Caco-2 (cell line): ENCODE measurements at regions of chr6 and their contacts with region 1.

Region 1: GRCh38 chr6:130293800-130294199 is 71.0 kb upstream of the SAMD3 start:
- DNase-seq: peak; percentile 73 to 74
- H3K4me3 ChIP-seq: no peak overlapping the region
- H3K4me3 Mint-ChIP-seq: no peak overlapping the region
- H3K27ac Mint-ChIP-seq: peak overlapping the region; percentile 49
- H3K4me1 ChIP-seq: peaks cover 4% of the 10 kb centered on the region; the same call in 1 of the 2 replicates
- H3K4me1 Mint-ChIP-seq: peaks cover 6% of the 10 kb centered on the region
- H3K27me3 ChIP-seq: no peaks in the 10 kb centered on the region
- H3K27me3 Mint-ChIP-seq: no peaks in the 10 kb centered on the region
- CTCF ChIP-seq: peak; percentile 60 to 75

Region 2: DNA sequence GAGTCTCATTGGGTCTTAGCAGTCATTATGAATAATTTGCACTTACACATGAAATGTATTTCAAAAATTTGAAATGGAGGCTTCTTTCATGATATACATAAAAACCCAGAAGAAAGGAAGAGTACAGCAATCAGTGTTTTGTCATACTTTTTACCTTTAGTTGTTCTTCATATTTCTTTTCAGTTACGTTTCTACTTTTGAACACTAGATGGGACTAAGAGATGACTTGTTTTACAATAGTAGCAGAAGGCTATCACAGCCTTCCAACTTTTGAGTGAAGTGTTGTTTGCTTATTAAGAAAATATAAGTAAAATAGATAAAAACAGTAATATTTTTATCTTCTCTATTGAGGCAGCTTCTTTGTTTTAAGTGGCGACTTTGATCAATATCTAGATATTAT is 217.3 kb before region 1 on chr6:
- CTCF ChIA-PET with region 1: no interaction called
- POLR2A ChIA-PET with region 1: no interaction called
- intact Hi-C with region 1: loop called (anchors 5 kb)
- DNase-seq: no peak
- H3K4me3 ChIP-seq: no peak overlapping the region
- H3K4me3 Mint-ChIP-seq: no peak overlapping the region
- H3K27ac Mint-ChIP-seq: no peak overlapping the region
- H3K4me1 ChIP-seq: no peaks in the 10 kb centered on the region
- H3K4me1 Mint-ChIP-seq: no peaks in the 10 kb centered on the region
- H3K27me3 ChIP-seq: no peaks in the 10 kb centered on the region
- H3K27me3 Mint-ChIP-seq: no peaks in the 10 kb centered on the region
- CTCF ChIP-seq: peak in 1 of 2 experiments; percentile 26

Region 3: DNA sequence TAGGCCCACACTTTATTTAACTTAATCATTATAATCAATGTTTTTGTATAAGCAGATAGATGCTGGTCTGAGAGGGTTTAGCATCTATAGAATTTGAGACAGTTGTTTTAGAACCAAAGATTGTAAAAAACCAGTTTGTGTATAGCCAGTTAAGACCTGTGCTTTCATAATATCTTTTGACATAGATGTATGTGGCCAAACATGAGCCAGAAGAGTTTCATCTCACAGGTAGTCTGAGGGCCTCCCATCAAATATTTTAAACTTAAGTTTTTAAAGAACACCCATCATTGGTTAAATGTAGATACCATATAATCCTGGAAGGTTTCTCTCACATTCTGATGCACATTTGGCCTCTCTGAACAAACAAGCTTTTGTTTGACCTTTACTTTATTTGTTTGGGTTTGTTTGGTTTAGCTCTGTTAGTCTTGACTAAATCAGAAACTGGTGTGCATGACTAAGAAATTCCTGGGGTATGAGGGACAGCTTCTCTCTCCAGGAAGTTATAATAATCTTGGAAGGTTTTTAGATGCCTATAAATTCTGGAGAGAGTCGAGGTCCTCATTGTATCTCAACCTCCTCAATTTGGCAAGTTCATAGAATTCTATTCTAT is 14.1 kb after region 1 on chr6:
- CTCF ChIA-PET with region 1: interaction called, 9 read pairs
- POLR2A ChIA-PET with region 1: no interaction called
- intact Hi-C with region 1: loop called (anchors 1 kb)
- DNase-seq: peak in 1 of 2 experiments; percentile 71
- H3K4me3 ChIP-seq: no peak overlapping the region
- H3K4me3 Mint-ChIP-seq: no peak overlapping the region
- H3K27ac Mint-ChIP-seq: peak overlapping the region; percentile 86
- H3K4me1 ChIP-seq: peaks cover 37% of the 10 kb centered on the region
- H3K4me1 Mint-ChIP-seq: peaks cover 14% of the 10 kb centered on the region
- H3K27me3 ChIP-seq: no peaks in the 10 kb centered on the region
- H3K27me3 Mint-ChIP-seq: no peaks in the 10 kb centered on the region
- CTCF ChIP-seq: no peak

Region 4: DNA sequence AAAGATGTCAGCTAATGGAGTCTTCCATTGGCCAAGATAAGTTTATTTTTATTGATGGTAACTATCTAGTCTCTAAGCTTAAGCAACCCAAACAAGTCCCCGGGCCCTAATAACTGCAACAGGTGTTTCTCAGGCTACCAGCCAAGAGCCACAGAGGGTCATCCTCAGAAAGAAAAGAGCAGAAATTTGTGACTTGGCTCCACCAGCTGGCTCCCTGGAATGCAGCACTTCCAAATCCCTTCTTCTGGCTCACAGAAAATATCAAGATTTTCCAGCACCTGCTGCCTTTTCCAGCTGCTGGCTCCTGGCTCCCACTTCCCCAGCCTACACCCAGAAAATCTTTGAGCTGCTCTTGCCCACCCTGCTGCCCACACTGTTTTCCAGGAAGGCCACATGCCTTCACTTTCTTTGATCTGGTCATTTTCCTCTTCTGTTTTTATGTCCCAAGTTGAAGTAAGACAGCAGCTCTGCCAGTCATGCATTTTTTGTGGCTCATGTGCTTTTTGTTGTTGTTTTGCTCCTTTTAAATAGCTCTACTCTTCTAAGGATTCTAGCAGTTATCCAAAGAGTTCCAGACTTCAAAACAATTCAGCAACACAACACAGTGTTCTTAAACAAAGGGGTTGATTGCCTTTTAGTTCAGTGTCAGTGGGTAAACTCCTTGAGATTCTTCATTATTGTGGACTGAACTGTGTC is 382.4 kb after region 1 on chr6:
- CTCF ChIA-PET with region 1: no interaction called
- POLR2A ChIA-PET with region 1: no interaction called
- intact Hi-C with region 1: loop called (anchors 1 kb)
- DNase-seq: peak in 1 of 2 experiments; percentile 14
- H3K4me3 ChIP-seq: no peak overlapping the region
- H3K4me3 Mint-ChIP-seq: no peak overlapping the region
- H3K27ac Mint-ChIP-seq: no peak overlapping the region
- H3K4me1 ChIP-seq: no peaks in the 10 kb centered on the region
- H3K4me1 Mint-ChIP-seq: no peaks in the 10 kb centered on the region
- H3K27me3 ChIP-seq: no peaks in the 10 kb centered on the region
- H3K27me3 Mint-ChIP-seq: peaks cover 2% of the 10 kb centered on the region
- CTCF ChIP-seq: peak in 1 of 2 experiments; percentile 51

Region 5: GRCh38 chr6:130697995-130698535 is 404.3 kb after region 1 on chr6:
- CTCF ChIA-PET with region 1: interaction called, 12 read pairs
- POLR2A ChIA-PET with region 1: no interaction called
- intact Hi-C with region 1: loop called (anchors 1 kb)
- DNase-seq: peak; percentile 41 to 59
- H3K4me3 ChIP-seq: no peak overlapping the region
- H3K4me3 Mint-ChIP-seq: no peak overlapping the region
- H3K27ac Mint-ChIP-seq: no peak overlapping the region
- H3K4me1 ChIP-seq: no peaks in the 10 kb centered on the region
- H3K4me1 Mint-ChIP-seq: no peaks in the 10 kb centered on the region
- H3K27me3 ChIP-seq: no peaks in the 10 kb centered on the region; the same call in 1 of the 2 replicates
- H3K27me3 Mint-ChIP-seq: peaks cover 8% of the 10 kb centered on the region
- CTCF ChIP-seq: peak; percentile 77 to 83